Breast epithelium (tissue), 4 donors: ENCODE measurements at regions of chrX and their contacts with region 1.

Region 1: GRCh38 chrX:102610905-102611304 is 11.6 kb downstream of the ARMCX5 start:
- DNase-seq: no peak
- H3K4me3 ChIP-seq: no peak overlapping the region
- H3K27ac ChIP-seq: no peak overlapping the region
- H3K4me1 ChIP-seq: no peaks in the 10 kb centered on the region
- H3K27me3 ChIP-seq: peaks cover 0 to 11% of the 10 kb centered on the region in 2 donors
- CTCF ChIP-seq: no peak
- POLR2A ChIP-seq: no peak

Region 2: DNA sequence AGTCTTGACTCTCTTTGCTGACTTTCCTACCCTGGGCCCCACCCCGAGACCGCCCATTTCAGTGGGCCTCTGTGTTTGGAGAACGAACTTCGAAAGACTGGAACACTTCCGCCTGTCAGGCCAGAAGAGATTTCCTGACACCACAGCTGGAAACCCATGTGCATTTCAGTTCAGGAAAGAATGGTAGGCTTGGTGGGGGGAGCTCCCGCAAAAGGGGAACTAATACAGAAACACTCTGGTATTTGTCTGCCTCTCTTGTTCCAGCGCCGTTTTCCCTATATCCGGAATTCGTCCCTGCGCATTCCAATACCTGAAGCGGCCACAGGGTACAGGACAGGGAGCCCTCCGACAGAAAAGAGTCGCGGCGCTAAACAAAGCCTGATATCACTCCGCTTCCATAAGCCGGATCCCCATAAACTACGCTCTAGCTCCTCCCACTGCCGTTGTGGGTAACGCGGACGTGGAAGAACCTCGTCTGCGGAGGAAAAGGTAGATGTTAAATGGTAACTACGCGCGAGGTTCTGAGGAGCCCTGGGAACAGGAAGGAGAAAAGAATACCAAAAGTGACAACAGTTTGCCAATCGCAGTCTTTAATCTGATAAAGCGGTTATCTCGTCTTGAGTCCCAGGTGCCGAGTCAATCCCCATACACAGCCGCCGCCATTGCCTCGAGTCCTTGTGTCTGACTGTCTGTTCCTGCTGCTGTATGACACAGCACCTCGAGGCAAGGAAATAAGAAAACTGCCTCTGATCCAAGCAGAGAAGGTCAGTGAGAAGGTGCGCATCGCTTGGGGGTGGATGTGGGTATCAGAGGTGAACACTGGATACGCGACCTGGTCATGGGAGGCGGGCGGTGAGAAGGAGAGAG is 11.6 kb before region 1 on chrX and contains the start of gene ARMCX5:
- intact Hi-C with region 1: loop called (anchors 1 kb)
- DNase-seq: peak; percentile 58 to 59
- H3K4me3 ChIP-seq: peak within 1 kb of the TSS; percentile 53 to 70 (median 60)
- H3K27ac ChIP-seq: peak within 1 kb of the TSS; percentile 81 to 84
- H3K4me1 ChIP-seq: no peaks in the 10 kb centered on the region
- H3K27me3 ChIP-seq: peaks cover 0 to 15% of the 10 kb centered on the region in 2 donors
- CTCF ChIP-seq: peak; percentile 26 to 44 (median 26)
- POLR2A ChIP-seq: peak; percentile 52
- total RNA-seq, gene ARMCX5: 13.9 to 21.5 (median 16.4) TPM